ENCODE measurements at regions of chr3 and their contacts with region 1.

Region 1: DNA sequence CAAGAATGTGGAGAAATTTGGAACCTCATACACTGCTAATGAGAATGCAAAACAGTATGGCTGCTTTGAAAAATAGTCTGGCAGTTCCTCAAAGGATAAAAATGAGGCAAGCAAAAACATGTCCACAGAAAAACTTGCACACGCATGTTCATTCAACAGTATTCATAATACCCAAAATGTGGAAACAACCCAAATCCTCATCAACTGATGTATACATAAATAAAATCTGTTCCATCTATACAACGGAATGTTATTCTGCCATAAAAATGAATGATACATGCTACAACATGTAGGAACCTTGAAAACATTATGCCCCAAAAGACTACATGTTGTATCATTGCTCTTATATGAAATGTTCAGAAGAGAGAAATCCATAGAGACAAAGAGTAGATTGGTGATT is 36.4 kb upstream of the OXTR start:
- DNase-seq: no peak
- H3K4me3 ChIP-seq: no peak overlapping the region
- H3K27ac ChIP-seq: no peak overlapping the region
- H3K4me1 ChIP-seq: no peaks in the 10 kb centered on the region
- H3K27me3 ChIP-seq: no peaks in the 10 kb centered on the region
- CTCF ChIP-seq: no peak

Region 2: DNA sequence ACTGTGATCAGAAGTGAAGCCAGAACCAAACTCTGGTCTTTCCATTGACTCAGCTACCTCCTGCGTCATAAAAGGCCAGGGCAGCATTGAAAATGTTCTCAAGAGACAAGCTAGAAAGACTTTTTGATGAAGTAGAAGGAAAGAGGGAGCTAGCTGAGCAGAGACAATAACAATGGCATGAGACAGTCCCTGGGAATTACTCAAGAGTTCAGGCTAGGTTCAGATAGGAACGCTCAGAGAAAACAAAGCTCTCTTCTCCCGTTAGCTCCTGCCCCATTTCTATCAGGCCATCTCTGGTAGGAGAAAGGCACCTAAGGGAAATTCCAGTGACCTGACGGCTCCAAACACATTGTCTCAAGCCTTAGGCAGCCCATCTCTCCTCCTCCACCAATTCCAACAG is 29.4 kb before region 1 on chr3:
- CTCF ChIA-PET with region 1: no interaction called
- POLR2A ChIA-PET with region 1: interaction called, 21 read pairs
- intact Hi-C with region 1: no loop called
- DNase-seq: peak in 1 of 2 experiments; percentile 15
- H3K4me3 ChIP-seq: no peak overlapping the region
- H3K27ac ChIP-seq: no peak overlapping the region
- H3K4me1 ChIP-seq: no peaks in the 10 kb centered on the region
- H3K27me3 ChIP-seq: no peaks in the 10 kb centered on the region
- CTCF ChIP-seq: no peak

Region 3: DNA sequence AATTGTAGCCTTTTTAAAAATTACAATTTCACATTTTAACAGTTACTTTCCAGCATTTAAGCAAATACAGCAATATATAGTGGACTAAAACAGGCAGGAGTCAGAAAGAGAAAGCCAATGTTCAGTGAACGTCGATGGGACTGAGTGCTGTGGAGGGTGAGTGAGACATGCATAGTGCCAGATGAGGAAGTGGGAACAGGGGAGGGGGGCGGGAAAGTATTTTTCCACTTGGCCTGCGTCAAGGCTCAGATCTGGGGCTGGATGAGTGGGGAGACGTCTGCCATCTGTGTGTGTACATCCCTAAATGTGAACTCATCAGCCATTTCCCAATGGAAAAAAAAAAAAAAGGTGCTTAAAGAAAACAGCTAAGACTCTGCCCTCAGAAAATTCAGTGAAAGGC is 176.7 kb after region 1 on chr3:
- CTCF ChIA-PET with region 1: no interaction called
- POLR2A ChIA-PET with region 1: no interaction called
- intact Hi-C with region 1: no loop called
- DNase-seq: no peak
- H3K4me3 ChIP-seq: no peak overlapping the region
- H3K27ac ChIP-seq: no peak overlapping the region
- H3K4me1 ChIP-seq: no peaks in the 10 kb centered on the region
- H3K27me3 ChIP-seq: peaks cover 39% of the 10 kb centered on the region
- CTCF ChIP-seq: no peak

Region 4: GRCh38 chr3:8996681-8997121 is 190.9 kb after region 1 on chr3:
- CTCF ChIA-PET with region 1: no interaction called
- POLR2A ChIA-PET with region 1: no interaction called
- intact Hi-C with region 1: no loop called
- DNase-seq: no peak
- H3K4me3 ChIP-seq: no peak overlapping the region
- H3K27ac ChIP-seq: no peak overlapping the region
- H3K4me1 ChIP-seq: no peaks in the 10 kb centered on the region
- H3K27me3 ChIP-seq: 0 out of 2 replicates have a peak, but pooled peaks cover 4% of the 10 kb centered on the region
- CTCF ChIP-seq: no peak